Mammary epithelial cell (primary cell): ENCODE measurements at regions of chr1 and their contacts with region 1.

Region 1: DNA sequence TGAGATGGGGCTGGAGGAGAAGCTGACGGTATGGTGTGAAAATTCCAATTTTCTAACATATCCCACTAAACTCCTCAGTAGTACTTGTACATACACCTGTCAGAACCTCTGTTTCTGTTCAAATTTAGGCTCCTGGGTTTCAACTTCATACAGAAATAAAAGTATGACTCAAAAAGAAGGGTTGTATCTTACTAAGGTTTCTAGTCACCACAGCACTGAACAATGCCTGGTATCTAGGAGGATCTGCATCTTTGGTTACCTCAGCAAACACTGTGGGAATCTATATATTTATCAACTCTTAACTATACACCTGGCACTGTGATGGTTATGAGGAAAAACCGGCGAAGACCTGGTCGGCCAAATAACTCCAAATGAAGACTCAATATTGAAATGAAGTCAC is 13.8 kb downstream of the RBM34 start:
- DNase-seq: no peak
- H3K4me3 ChIP-seq: no peak overlapping the region
- H3K27ac ChIP-seq: no peak overlapping the region
- H3K4me1 ChIP-seq: no peaks in the 10 kb centered on the region
- H3K27me3 ChIP-seq: no peaks in the 10 kb centered on the region
- CTCF ChIP-seq: no peak

Region 2: DNA sequence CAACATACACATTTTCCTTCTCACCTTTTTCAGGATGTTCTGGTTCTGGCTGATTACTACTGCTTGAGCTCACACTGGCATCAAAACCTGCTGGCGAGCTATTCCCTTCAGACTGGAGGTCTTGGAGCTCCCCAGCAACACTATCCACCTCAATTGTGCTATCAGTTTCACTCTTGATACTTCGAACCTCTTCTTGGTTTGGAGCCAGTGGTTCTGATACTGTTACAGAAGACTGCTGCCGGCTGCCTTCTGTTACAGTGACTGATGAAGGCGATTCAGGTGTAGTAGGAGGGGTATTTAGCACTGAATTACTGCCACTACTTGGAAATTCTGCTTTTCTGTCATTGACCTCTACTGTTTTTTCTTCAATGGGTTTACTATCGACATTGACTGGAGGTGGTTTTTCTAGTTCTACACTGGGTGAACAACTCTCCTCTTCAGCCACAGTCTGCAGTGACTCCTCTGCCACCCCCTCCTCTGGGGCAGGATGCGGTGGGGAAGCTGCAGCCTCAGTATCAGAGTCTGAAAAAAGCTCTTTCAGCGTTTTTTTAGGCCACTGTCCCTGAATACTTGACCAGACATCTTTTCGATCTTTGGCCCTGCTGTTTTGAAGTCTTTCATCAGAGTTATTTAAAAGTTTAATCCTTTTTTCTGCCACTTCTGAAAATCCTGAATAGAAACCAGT is 34.4 kb after region 1 on chr1:
- CTCF ChIA-PET with region 1: no interaction called
- dilution Hi-C with region 1: loop called (anchors 5 kb)
- in situ Hi-C with region 1: no loop called
- intact Hi-C with region 1: no loop called
- DNase-seq: no peak
- H3K4me3 ChIP-seq: no peak overlapping the region
- H3K27ac ChIP-seq: no peak overlapping the region
- H3K4me1 ChIP-seq: no peaks in the 10 kb centered on the region
- H3K27me3 ChIP-seq: no peaks in the 10 kb centered on the region
- CTCF ChIP-seq: no peak

Region 3: GRCh38 chr1:235504496-235505222 is 357.4 kb after region 1 on chr1:
- CTCF ChIA-PET with region 1: no interaction called
- dilution Hi-C with region 1: no loop called
- in situ Hi-C with region 1: no loop called
- intact Hi-C with region 1: no loop called
- DNase-seq: peak; percentile 99
- H3K4me3 ChIP-seq: peak overlapping the region; percentile 93 to 96 (median 95)
- H3K27ac ChIP-seq: peak overlapping the region; percentile 97
- H3K4me1 ChIP-seq: peaks cover 4% of the 10 kb centered on the region
- H3K27me3 ChIP-seq: no peaks in the 10 kb centered on the region
- CTCF ChIP-seq: peak; percentile 65 to 88